ENCODE measurements at regions of chr3 and their contacts with region 1.

Region 1: DNA sequence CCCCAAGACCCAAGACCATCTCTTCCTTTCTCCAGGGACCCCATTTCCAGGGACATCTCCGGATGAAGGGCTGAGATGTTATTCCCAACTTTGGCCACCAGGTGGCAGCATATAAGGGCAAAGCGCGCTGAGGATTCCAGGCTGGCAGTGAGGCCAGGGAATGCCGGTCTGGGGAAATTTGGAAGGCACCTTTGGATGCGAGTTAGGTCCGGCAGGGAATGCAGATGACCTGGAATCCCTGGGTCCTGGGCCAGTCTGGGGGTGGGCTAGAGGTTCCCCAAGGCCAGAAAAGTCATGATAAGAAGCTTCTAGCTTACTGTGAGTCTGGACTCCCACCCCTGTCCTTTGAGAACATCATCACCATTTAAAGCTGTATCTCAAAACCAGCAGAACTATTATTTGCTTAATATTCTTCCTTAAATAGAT is 1.6 kb upstream of the CHST13 start:
- DNase-seq: peak in 1 of 2 experiments; percentile 55
- H3K4me3 ChIP-seq: no peak overlapping the region
- H3K27ac ChIP-seq: no peak overlapping the region
- H3K4me1 ChIP-seq: no peaks in the 10 kb centered on the region
- H3K27me3 ChIP-seq: peaks cover 28% of the 10 kb centered on the region; the same call in 1 of the 2 replicates
- CTCF ChIP-seq: peak; percentile 93

Region 2: GRCh38 chr3:126446791-126447190 is 75.6 kb before region 1 on chr3:
- CTCF ChIA-PET with region 1: no interaction called
- POLR2A ChIA-PET with region 1: no interaction called
- intact Hi-C with region 1: no loop called
- DNase-seq: no peak
- H3K4me3 ChIP-seq: no peak overlapping the region
- H3K27ac ChIP-seq: no peak overlapping the region
- H3K4me1 ChIP-seq: no peaks in the 10 kb centered on the region
- H3K27me3 ChIP-seq: no peaks in the 10 kb centered on the region
- CTCF ChIP-seq: no peak

Region 3: GRCh38 chr3:126550488-126551051 is 28.2 kb after region 1 on chr3:
- CTCF ChIA-PET with region 1: interaction called, 13 read pairs
- POLR2A ChIA-PET with region 1: no interaction called
- intact Hi-C with region 1: no loop called
- DNase-seq: no peak
- H3K4me3 ChIP-seq: no peak overlapping the region
- H3K27ac ChIP-seq: no peak overlapping the region
- H3K4me1 ChIP-seq: no peaks in the 10 kb centered on the region
- H3K27me3 ChIP-seq: peaks cover 63% of the 10 kb centered on the region
- CTCF ChIP-seq: no peak

Region 4: GRCh38 chr3:126659945-126660886 is 137.8 kb after region 1 on chr3:
- CTCF ChIA-PET with region 1: no interaction called
- POLR2A ChIA-PET with region 1: no interaction called
- intact Hi-C with region 1: loop called (anchors 5 kb)
- DNase-seq: peak in 1 of 2 experiments; percentile 40
- H3K4me3 ChIP-seq: no peak overlapping the region
- H3K27ac ChIP-seq: no peak overlapping the region
- H3K4me1 ChIP-seq: no peaks in the 10 kb centered on the region
- H3K27me3 ChIP-seq: peaks cover 50% of the 10 kb centered on the region
- CTCF ChIP-seq: no peak; the same call in 1 of the 2 replicates

Region 5: GRCh38 chr3:126679318-126679751 is 157.0 kb after region 1 on chr3:
- CTCF ChIA-PET with region 1: no interaction called
- POLR2A ChIA-PET with region 1: no interaction called
- intact Hi-C with region 1: loop called (anchors 5 kb)
- DNase-seq: peak; percentile 59 to 88
- H3K4me3 ChIP-seq: no peak overlapping the region
- H3K27ac ChIP-seq: no peak overlapping the region
- H3K4me1 ChIP-seq: no peaks in the 10 kb centered on the region
- H3K27me3 ChIP-seq: peaks cover 12% of the 10 kb centered on the region
- CTCF ChIP-seq: peak; percentile 97

Region 6: DNA sequence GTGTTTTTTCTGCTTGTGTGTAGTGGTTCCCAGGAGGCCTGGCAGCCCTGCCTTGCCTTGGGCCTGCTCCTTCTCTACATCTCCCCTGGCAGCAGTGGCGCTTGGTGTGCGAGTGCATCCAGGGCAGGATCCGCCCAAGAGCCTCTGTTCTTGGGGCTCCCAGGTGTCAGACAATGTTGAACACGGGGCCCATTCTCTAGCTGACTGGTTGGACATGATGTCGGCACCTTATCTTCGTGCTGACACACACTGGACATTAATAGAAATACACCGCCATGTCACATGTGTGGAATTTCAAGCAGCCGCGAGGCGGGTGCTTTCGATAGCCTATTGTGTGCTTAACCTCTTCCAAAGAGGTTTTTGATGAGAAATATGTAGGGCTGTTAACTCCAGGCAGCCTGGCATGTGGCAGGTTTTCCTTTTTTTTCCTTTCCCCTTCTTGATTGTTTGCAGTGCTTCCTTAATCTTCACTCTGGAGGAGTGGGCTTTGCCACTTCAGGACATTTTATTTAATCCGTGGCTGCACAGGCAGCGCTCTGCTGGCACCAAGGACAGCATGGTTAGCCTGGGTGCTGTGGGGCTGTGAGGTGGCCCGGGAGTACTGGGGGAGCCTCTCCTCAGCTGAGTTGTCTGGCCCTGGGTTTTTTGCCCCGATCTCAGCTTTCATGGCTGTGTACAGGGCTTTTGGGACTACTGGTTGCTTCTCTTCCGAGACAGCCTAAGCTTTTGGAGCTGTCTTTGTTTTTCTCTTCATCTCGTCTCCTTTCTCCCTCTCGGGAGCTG is 224.2 kb after region 1 on chr3:
- CTCF ChIA-PET with region 1: interaction called, 3 read pairs
- POLR2A ChIA-PET with region 1: interaction called, 10 read pairs
- intact Hi-C with region 1: no loop called
- DNase-seq: peak in 1 of 2 experiments; percentile 66
- H3K4me3 ChIP-seq: no peak overlapping the region
- H3K27ac ChIP-seq: no peak overlapping the region
- H3K4me1 ChIP-seq: no peaks in the 10 kb centered on the region
- H3K27me3 ChIP-seq: no peaks in the 10 kb centered on the region
- CTCF ChIP-seq: no peak

Region 7: DNA sequence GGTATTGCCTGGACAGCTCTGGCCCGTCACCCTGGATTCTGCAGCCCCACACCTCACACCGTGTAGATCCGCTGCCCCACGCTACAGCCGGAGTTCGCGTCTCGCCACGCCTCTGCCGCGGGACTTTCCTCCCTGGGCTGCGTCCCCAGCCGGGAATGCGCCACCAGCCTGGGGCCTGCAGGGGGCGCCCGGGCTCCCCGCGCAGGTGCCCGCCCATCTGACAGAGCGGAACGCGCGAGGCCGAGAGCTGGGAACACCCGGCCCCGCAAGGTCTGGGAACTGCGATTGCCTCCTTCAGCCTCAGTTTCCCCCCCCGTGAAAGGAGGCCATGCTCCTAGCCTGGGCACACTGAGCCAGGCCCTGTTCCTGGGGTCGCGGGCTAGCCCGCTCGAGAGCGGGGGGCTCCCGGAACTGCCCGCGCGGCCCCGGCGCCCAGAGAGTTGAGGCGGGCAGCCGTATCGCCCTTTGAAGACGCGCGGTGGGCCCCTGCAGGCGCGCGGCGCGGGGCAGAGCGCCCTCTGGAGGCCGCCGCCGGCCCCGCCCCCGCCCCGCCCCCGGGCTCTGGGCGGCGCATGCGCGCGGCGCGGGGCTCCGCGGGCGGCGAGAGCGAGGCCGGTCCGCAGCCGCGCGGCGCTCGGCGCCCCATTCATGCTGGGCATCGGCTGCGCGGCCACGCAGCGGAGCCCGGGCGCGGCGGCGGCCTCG is 460.2 kb after region 1 on chr3 and contains the start of gene PLXNA1:
- CTCF ChIA-PET with region 1: no interaction called
- POLR2A ChIA-PET with region 1: no interaction called
- intact Hi-C with region 1: no loop called
- DNase-seq: peak in 1 of 2 experiments; percentile 82
- H3K4me3 ChIP-seq: peak within 1 kb of the TSS; percentile 86
- H3K27ac ChIP-seq: no peak within 1 kb of the TSS
- H3K4me1 ChIP-seq: peaks cover 20% of the 10 kb centered on the region
- H3K27me3 ChIP-seq: no peaks in the 10 kb centered on the region
- CTCF ChIP-seq: peak; percentile 93
- total RNA-seq, gene PLXNA1: 83.1 and 88.2 TPM in 2 replicates

Region 8: GRCh38 chr3:127455541-127456450 is 933.4 kb after region 1 on chr3:
- CTCF ChIA-PET with region 1: no interaction called
- POLR2A ChIA-PET with region 1: no interaction called
- intact Hi-C with region 1: loop called (anchors 5 kb)
- DNase-seq: peak in 1 of 2 experiments; percentile 90
- H3K4me3 ChIP-seq: peak overlapping the region; percentile 39; the same call in 1 of the 2 replicates
- H3K27ac ChIP-seq: no peak overlapping the region
- H3K4me1 ChIP-seq: peaks cover 11% of the 10 kb centered on the region
- H3K27me3 ChIP-seq: peaks cover 60% of the 10 kb centered on the region
- CTCF ChIP-seq: peak; percentile 82

Region 9: GRCh38 chr3:127473244-127474024 is 951.1 kb after region 1 on chr3:
- CTCF ChIA-PET with region 1: no interaction called
- POLR2A ChIA-PET with region 1: no interaction called
- intact Hi-C with region 1: loop called (anchors 5 kb)
- DNase-seq: peak in 1 of 2 experiments; percentile 58
- H3K4me3 ChIP-seq: no peak overlapping the region
- H3K27ac ChIP-seq: no peak overlapping the region
- H3K4me1 ChIP-seq: no peaks in the 10 kb centered on the region
- H3K27me3 ChIP-seq: peaks cover 43% of the 10 kb centered on the region
- CTCF ChIP-seq: peak; percentile 58

Measured in PC-9 (cell line).